ENCODE measurements at regions of chr10 and their contacts with region 1.

Region 1: DNA sequence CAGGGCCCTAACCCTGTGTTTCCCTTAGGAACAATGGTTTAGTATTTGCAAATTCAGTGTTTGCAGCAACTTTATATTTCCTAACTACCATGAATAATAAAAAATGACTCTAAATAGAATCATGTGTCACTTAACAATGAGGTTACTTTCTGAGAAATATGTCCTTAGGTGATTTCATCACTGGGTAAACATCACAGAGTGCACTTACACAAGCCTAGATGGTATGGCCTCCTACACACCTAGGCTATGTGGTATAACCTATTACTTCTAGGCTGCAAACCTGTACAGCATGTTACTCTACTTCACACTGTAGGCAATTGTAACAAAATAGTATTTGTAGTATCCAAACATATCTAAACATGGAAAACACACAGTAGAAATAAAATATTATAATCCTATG is 1174.6 kb upstream of the LRRTM3 start:
- DNase-seq: peak; percentile 94
- ATAC-seq: peak; percentile 85
- H3K4me3 ChIP-seq: no peak overlapping the region
- H3K27ac ChIP-seq: peak overlapping the region; percentile 66
- H3K4me1 ChIP-seq: peaks cover 32% of the 10 kb centered on the region
- H3K27me3 ChIP-seq: no peaks in the 10 kb centered on the region
- CTCF ChIP-seq: no peak

Region 2: DNA sequence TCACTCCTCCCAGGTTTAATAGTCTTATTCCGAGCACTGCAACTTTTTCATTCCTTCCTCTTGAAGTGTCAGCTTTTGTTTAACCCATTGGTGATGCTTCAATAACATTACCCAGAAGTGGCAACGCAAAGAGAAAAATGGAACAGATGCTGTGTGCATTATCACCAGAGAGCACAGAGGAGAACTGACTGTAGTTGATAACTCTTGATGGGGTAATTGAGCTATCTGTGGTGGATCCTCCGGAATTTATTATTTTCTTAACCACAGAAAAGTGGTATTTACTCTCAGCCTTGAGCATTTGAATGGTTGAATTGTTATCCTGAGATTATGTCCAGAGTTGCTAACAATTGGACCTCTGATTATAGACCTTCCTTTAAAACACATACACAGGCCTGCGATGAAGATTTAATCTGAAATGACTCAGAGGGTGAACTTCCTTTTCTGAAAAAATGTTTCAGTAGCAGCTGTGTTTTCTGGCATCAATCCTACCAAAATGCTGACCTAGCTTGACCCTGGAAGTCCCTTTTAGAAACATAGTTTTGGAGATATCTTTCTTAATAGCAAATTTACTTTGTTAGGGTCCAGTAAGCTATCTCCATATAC is 409.8 kb before region 1 on chr10:
- CTCF ChIA-PET with region 1: no interaction called
- POLR2A ChIA-PET with region 1: no interaction called
- intact Hi-C with region 1: loop called (anchors 10 kb)
- DNase-seq: peak; percentile 90
- ATAC-seq: peak; percentile 90
- H3K4me3 ChIP-seq: no peak overlapping the region
- H3K27ac ChIP-seq: peak overlapping the region; percentile 29
- H3K4me1 ChIP-seq: peaks cover 27% of the 10 kb centered on the region
- H3K27me3 ChIP-seq: no peaks in the 10 kb centered on the region
- CTCF ChIP-seq: no peak

Region 3: DNA sequence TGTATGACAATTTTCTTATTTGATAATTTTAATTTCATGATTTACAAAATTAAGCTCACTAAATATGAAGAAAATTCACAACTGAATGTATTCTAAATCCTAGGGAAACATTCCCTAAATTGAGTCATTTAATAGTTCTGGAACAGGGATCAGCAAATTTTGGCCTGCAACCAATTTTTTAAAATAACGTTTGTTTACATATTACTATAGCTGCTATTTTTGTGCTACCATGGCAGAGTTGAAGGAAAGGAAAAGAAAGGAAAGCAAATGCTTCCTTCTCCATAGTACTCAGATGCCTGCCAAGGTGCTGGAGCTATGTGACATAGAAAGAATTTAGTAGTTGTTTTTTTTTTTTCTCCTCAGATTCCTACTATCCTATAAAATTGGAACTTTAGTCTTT is 133.1 kb before region 1 on chr10:
- CTCF ChIA-PET with region 1: no interaction called
- POLR2A ChIA-PET with region 1: no interaction called
- intact Hi-C with region 1: loop called (anchors 5 kb)
- DNase-seq: peak; percentile 68
- ATAC-seq: peak; percentile 80
- H3K4me3 ChIP-seq: no peak overlapping the region
- H3K27ac ChIP-seq: no peak overlapping the region
- H3K4me1 ChIP-seq: peaks cover 3% of the 10 kb centered on the region; the same call in 1 of the 2 replicates
- H3K27me3 ChIP-seq: no peaks in the 10 kb centered on the region
- CTCF ChIP-seq: no peak

Region 4: GRCh38 chr10:65779985-65780384 is 28.8 kb after region 1 on chr10:
- CTCF ChIA-PET with region 1: no interaction called
- POLR2A ChIA-PET with region 1: no interaction called
- intact Hi-C with region 1: no loop called
- DNase-seq: no peak
- ATAC-seq: no peak
- H3K4me3 ChIP-seq: no peak overlapping the region
- H3K27ac ChIP-seq: no peak overlapping the region
- H3K4me1 ChIP-seq: no peaks in the 10 kb centered on the region
- H3K27me3 ChIP-seq: no peaks in the 10 kb centered on the region
- CTCF ChIP-seq: no peak

Region 5: GRCh38 chr10:65805993-65806392 is 54.8 kb after region 1 on chr10:
- CTCF ChIA-PET with region 1: no interaction called
- POLR2A ChIA-PET with region 1: no interaction called
- intact Hi-C with region 1: no loop called
- DNase-seq: peak; percentile 21
- ATAC-seq: no peak
- H3K4me3 ChIP-seq: no peak overlapping the region
- H3K27ac ChIP-seq: no peak overlapping the region
- H3K4me1 ChIP-seq: no peaks in the 10 kb centered on the region
- H3K27me3 ChIP-seq: no peaks in the 10 kb centered on the region
- CTCF ChIP-seq: no peak

Region 6: GRCh38 chr10:65861249-65861648 is 110.0 kb after region 1 on chr10:
- CTCF ChIA-PET with region 1: no interaction called
- POLR2A ChIA-PET with region 1: no interaction called
- intact Hi-C with region 1: loop called (anchors 2 kb)
- DNase-seq: peak; percentile 92
- ATAC-seq: peak; percentile 99
- H3K4me3 ChIP-seq: no peak overlapping the region
- H3K27ac ChIP-seq: peak overlapping the region; percentile 20
- H3K4me1 ChIP-seq: peaks cover 15% of the 10 kb centered on the region
- H3K27me3 ChIP-seq: no peaks in the 10 kb centered on the region
- CTCF ChIP-seq: no peak

Region 7: GRCh38 chr10:65931291-65932070 is 180.3 kb after region 1 on chr10:
- CTCF ChIA-PET with region 1: no interaction called
- POLR2A ChIA-PET with region 1: no interaction called
- intact Hi-C with region 1: no loop called
- DNase-seq: no peak
- ATAC-seq: no peak
- H3K4me3 ChIP-seq: no peak overlapping the region
- H3K27ac ChIP-seq: no peak overlapping the region
- H3K4me1 ChIP-seq: no peaks in the 10 kb centered on the region
- H3K27me3 ChIP-seq: no peaks in the 10 kb centered on the region
- CTCF ChIP-seq: no peak

Region 8: DNA sequence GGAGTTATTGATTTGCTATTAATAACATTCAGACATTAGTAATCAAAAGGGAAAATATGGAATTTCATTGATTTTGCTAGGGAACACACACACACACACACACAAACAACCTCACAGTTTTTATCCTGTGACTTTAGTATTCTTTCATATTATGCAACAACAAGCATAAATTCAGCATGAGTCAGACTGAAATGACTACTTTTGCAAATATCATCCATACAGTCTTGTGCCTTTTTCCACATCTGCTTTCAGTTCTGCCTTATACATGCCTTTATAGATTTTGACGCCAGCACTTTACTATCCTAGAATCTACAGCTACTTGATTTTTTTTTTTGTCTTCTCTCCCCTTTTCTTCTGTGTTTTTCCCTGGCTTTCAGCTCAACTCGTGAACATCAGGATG is 198.9 kb after region 1 on chr10:
- CTCF ChIA-PET with region 1: no interaction called
- POLR2A ChIA-PET with region 1: no interaction called
- intact Hi-C with region 1: loop called (anchors 5 kb)
- DNase-seq: peak; percentile 84
- ATAC-seq: peak; percentile 90
- H3K4me3 ChIP-seq: no peak overlapping the region
- H3K27ac ChIP-seq: no peak overlapping the region
- H3K4me1 ChIP-seq: peaks cover 4% of the 10 kb centered on the region; the same call in 1 of the 2 replicates
- H3K27me3 ChIP-seq: no peaks in the 10 kb centered on the region
- CTCF ChIP-seq: no peak

Measured in PC-3 (cell line).